Activated CD4-positive, alpha-beta memory T cell treated with anti-CD3 and anti-CD28 coated beads for 36 hours (primary cell): ENCODE measurements at regions of chr20 and their contacts with region 1.

Region 1: GRCh38 chr20:47610247-47610944 is 108.7 kb downstream of the NCOA3 start:
- DNase-seq: peak; percentile 91
- H3K4me3 Mint-ChIP-seq: peak overlapping the region; percentile 67
- H3K27ac Mint-ChIP-seq: peak overlapping the region; percentile 90
- H3K4me1 Mint-ChIP-seq: peaks cover 86% of the 10 kb centered on the region
- H3K27me3 Mint-ChIP-seq: no peaks in the 10 kb centered on the region

Region 2: DNA sequence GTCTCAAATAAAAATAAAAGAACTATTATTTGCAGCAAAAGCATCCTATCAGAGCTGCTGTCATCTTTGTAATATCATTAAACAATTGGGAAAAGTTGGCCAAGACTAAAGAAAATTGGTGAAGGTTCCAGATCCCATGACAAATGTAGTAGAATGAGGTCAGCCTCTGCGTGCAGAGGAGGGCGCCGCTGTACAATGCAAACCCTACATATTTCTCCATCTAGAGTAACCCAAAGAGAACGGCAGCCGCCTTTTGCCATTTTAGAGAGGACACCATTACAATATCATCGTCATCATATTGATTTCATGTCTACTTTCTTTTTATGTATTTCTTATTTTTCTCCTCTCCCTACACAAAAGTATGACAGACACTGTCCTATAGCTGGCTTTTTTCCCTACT is 313.4 kb before region 1 on chr20:
- CTCF ChIA-PET with region 1: no interaction called
- POLR2A ChIA-PET with region 1: no interaction called
- intact Hi-C with region 1: no loop called
- DNase-seq: no peak
- H3K4me3 Mint-ChIP-seq: no peak overlapping the region
- H3K27ac Mint-ChIP-seq: no peak overlapping the region
- H3K4me1 Mint-ChIP-seq: peaks cover 12% of the 10 kb centered on the region
- H3K27me3 Mint-ChIP-seq: no peaks in the 10 kb centered on the region

Region 3: GRCh38 chr20:47453142-47453782 is 157.1 kb before region 1 on chr20:
- CTCF ChIA-PET with region 1: interaction called, 4 read pairs
- POLR2A ChIA-PET with region 1: interaction called, 4 read pairs
- intact Hi-C with region 1: loop called (anchors 1 kb)
- DNase-seq: peak; percentile 77
- H3K4me3 Mint-ChIP-seq: no peak overlapping the region
- H3K27ac Mint-ChIP-seq: peak overlapping the region; percentile 74
- H3K4me1 Mint-ChIP-seq: peaks cover 35% of the 10 kb centered on the region
- H3K27me3 Mint-ChIP-seq: no peaks in the 10 kb centered on the region

Region 4: GRCh38 chr20:47568001-47568407 is 42.4 kb before region 1 on chr20:
- CTCF ChIA-PET with region 1: no interaction called
- POLR2A ChIA-PET with region 1: no interaction called
- intact Hi-C with region 1: loop called (anchors 5 kb)
- DNase-seq: no peak
- H3K4me3 Mint-ChIP-seq: no peak overlapping the region
- H3K27ac Mint-ChIP-seq: peak overlapping the region; percentile 80
- H3K4me1 Mint-ChIP-seq: peaks cover 58% of the 10 kb centered on the region
- H3K27me3 Mint-ChIP-seq: no peaks in the 10 kb centered on the region

Region 5: DNA sequence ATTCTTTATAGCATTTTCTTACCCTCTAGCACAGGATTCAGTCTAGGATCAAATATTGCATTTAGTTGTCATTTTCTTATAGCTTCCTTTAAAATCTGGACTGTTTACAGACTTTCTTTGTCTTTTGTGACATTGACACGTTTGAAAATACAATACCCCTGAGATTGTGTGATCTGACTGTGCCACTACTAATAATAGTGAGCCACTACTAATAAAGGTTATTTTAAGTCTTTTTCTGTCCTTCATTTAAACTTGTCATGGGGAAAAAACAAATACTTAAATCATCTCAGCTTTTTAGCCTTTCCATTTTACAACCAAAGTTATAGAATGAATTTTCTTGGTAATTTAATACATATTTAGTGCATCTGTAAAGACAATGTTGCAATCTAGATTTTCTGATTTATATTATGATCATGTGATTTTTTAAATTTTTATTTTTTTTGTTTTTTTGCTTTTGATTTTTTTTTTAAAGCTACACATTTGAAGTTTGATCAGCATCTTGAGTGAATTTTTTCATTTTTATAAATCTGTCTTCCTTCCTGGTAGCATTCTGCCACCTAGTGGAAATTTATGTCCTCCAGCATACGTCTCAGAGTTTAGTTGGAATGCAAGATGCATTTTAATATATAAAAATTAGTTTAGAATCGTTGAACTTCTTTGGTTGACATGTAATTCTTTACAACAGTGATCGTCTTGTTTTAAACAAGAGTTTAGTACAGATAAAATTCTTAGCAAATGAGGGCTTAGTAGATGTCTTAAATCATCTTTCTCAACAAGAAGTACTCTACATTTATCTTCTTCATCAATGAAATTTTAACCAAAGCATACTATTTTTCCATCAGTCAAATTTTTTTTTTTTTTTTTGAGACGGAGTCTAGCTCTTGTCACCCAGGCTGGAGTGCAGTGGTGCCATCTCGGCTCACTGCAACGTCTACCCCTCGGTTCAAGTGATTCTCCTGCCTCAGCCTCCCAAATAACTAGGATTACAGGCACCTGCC is 10.7 kb after region 1 on chr20:
- CTCF ChIA-PET with region 1: interaction called, 23 read pairs
- POLR2A ChIA-PET with region 1: no interaction called
- intact Hi-C with region 1: no loop called
- DNase-seq: no peak
- H3K4me3 Mint-ChIP-seq: no peak overlapping the region
- H3K27ac Mint-ChIP-seq: peak overlapping the region; percentile 11
- H3K4me1 Mint-ChIP-seq: peaks cover 33% of the 10 kb centered on the region
- H3K27me3 Mint-ChIP-seq: no peaks in the 10 kb centered on the region

Region 6: DNA sequence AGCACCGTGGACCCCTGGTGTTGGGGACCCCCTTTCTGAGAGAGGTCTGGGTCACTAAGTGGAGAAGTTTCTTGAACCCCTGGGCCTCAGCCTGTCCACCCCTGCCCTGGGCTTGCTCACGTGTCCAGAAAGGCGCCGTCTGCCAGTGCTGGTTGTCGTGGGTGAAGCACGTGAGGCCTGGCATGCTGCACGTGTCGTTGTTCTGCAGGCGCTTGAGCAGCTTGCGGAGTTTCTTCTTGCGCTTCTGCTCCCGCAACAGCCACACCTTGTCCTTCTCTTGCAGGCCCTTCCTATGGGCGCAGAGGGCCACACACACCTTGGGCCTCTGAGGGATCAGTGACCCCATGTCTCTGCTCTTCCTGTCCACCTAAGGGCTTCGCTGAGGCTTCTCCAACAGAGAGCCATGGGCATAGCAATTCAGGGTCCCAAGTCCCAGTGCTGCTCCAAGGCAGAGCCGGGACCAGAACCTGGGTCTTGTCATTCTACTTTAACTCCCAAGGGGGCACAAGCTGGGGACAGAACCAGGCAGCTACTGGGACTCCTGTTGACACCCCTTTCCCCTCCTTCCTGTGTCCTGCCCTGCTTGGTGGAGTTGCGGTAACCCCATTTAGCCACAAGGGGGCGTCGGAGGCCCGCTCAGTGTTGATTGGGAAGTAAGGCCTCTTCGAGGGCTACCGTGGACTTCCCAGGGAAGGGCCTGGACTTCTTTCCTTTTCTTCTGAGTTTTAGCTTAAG is 53.1 kb after region 1 on chr20:
- CTCF ChIA-PET with region 1: no interaction called
- POLR2A ChIA-PET with region 1: no interaction called
- intact Hi-C with region 1: no loop called
- DNase-seq: peak; percentile 85
- H3K4me3 Mint-ChIP-seq: no peak overlapping the region
- H3K27ac Mint-ChIP-seq: no peak overlapping the region
- H3K4me1 Mint-ChIP-seq: peaks cover 2% of the 10 kb centered on the region
- H3K27me3 Mint-ChIP-seq: no peaks in the 10 kb centered on the region